ENCODE measurements at regions of chr19 and their contacts with region 1.

Region 1: GRCh38 chr19:8194528-8195267 is 14.5 kb upstream of the CERS4 start:
- DNase-seq: no peak
- ATAC-seq: peak; percentile 57
- H3K4me3 ChIP-seq: peak overlapping the region; percentile 31; the same call in 1 of the 2 replicates
- H3K27ac ChIP-seq: peak overlapping the region; percentile 97
- H3K4me1 ChIP-seq: peaks cover 36% of the 10 kb centered on the region
- H3K27me3 ChIP-seq: no peaks in the 10 kb centered on the region
- CTCF ChIP-seq: no peak
- EP300 ChIP-seq: no peak
- POLR2A ChIP-seq: no peak
- RAD21 ChIP-seq: no peak

Region 2: GRCh38 chr19:8148410-8149231 is 46.1 kb before region 1 on chr19:
- CTCF ChIA-PET with region 1: no interaction called
- POLR2A ChIA-PET with region 1: no interaction called
- RAD21 ChIA-PET with region 1: no interaction called
- SMC1A ChIA-PET with region 1: no interaction called
- in situ Hi-C with region 1: no loop called
- intact Hi-C with region 1: no loop called
- DNase-seq: no peak
- ATAC-seq: no peak
- H3K4me3 ChIP-seq: no peak overlapping the region
- H3K27ac ChIP-seq: no peak overlapping the region
- H3K4me1 ChIP-seq: no peaks in the 10 kb centered on the region
- H3K27me3 ChIP-seq: peaks cover 6 to 9% of the 10 kb centered on the region in 2 experiments; a peak in 3 of 4 replicates
- CTCF ChIP-seq: no peak
- EP300 ChIP-seq: no peak
- POLR2A ChIP-seq: no peak
- RAD21 ChIP-seq: no peak

Region 3: GRCh38 chr19:8208922-8209461 is 14.3 kb after region 1 on chr19 and contains the start of gene CERS4:
- CTCF ChIA-PET with region 1: interaction called, 52 read pairs
- POLR2A ChIA-PET with region 1: interaction called, 111 read pairs
- RAD21 ChIA-PET with region 1: interaction called, 100 read pairs
- SMC1A ChIA-PET with region 1: interaction called, 83 read pairs
- in situ Hi-C with region 1: no loop called
- intact Hi-C with region 1: no loop called
- DNase-seq: no peak
- ATAC-seq: peak; percentile 82
- H3K4me3 ChIP-seq: peak within 1 kb of the TSS; percentile 83
- H3K27ac ChIP-seq: peak within 1 kb of the TSS; percentile 95
- H3K4me1 ChIP-seq: peaks cover 13% of the 10 kb centered on the region
- H3K27me3 ChIP-seq: no peaks in the 10 kb centered on the region
- CTCF ChIP-seq: no peak
- EP300 ChIP-seq: no peak
- POLR2A ChIP-seq: no peak
- RAD21 ChIP-seq: no peak
- polyA plus RNA-seq, gene CERS4: 0.34 to 1.9 TPM

Region 4: GRCh38 chr19:8214802-8215201 is 20.1 kb after region 1 on chr19:
- CTCF ChIA-PET with region 1: interaction called, 52 read pairs
- POLR2A ChIA-PET with region 1: interaction called, 111 read pairs
- RAD21 ChIA-PET with region 1: interaction called, 100 read pairs
- SMC1A ChIA-PET with region 1: interaction called, 83 read pairs
- in situ Hi-C with region 1: no loop called
- intact Hi-C with region 1: no loop called
- DNase-seq: no peak
- ATAC-seq: no peak
- H3K4me3 ChIP-seq: peak overlapping the region; percentile 53; the same call in 1 of the 2 replicates
- H3K27ac ChIP-seq: peak overlapping the region; percentile 22; the same call in 1 of the 2 replicates
- H3K4me1 ChIP-seq: peaks cover 24% of the 10 kb centered on the region
- H3K27me3 ChIP-seq: no peaks in the 10 kb centered on the region
- CTCF ChIP-seq: no peak
- EP300 ChIP-seq: no peak
- POLR2A ChIP-seq: no peak
- RAD21 ChIP-seq: no peak

Region 5: GRCh38 chr19:8238251-8238650 is 43.6 kb after region 1 on chr19:
- CTCF ChIA-PET with region 1: interaction called, 3 read pairs
- POLR2A ChIA-PET with region 1: interaction called, 4 read pairs
- RAD21 ChIA-PET with region 1: interaction called, 6 read pairs
- SMC1A ChIA-PET with region 1: interaction called, 11 read pairs
- in situ Hi-C with region 1: no loop called
- intact Hi-C with region 1: no loop called
- DNase-seq: no peak
- ATAC-seq: no peak
- H3K4me3 ChIP-seq: no peak overlapping the region
- H3K27ac ChIP-seq: no peak overlapping the region
- H3K4me1 ChIP-seq: peaks cover 13% of the 10 kb centered on the region
- H3K27me3 ChIP-seq: no peaks in the 10 kb centered on the region
- CTCF ChIP-seq: no peak
- EP300 ChIP-seq: no peak
- POLR2A ChIP-seq: no peak
- RAD21 ChIP-seq: no peak

Region 6: DNA sequence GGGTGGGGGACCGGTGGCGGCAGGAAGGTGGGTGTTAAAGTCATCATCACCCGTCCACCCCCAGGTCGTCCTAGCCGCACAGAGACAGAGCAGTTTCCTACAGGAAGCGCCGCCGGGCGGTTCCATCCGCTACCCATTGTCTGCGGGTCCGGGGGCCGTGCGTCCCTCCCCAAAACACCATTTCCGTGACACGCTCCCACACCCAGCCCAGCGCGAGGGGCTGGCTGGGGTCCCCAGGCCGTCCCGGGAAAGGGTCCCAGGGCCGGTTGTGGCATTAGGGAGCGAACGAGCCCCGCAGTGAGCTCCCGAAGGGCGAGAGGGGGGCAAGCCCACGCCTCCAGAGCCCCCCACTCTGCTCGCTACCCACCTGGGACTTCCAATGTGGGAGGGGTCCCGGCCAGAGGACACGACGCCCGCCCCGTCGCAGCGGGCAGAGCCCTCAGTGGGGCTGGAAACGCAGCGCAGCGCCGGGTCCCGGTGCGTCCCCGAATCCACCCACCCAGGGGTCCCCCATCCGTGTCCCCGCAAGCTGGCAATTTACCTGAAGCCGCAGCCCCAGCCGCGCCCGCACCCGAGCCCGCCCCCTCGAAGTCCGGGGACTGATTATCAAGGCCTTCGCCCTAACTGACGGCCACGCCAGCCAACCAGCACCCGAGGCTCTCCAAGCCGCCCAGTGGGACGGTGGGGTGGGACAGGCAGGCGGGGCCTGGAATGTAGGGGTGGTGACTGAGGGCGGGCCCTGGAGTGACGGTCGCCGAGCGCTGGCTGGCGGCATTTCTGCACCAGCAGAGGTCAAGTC is 148.2 kb after region 1 on chr19 and contains the start of gene KANK3:
- CTCF ChIA-PET with region 1: no interaction called
- POLR2A ChIA-PET with region 1: no interaction called
- RAD21 ChIA-PET with region 1: no interaction called
- SMC1A ChIA-PET with region 1: no interaction called
- in situ Hi-C with region 1: no loop called
- intact Hi-C with region 1: no loop called
- DNase-seq: peak; percentile 55
- ATAC-seq: peak; percentile 100
- H3K4me3 ChIP-seq: peak within 1 kb of the TSS; percentile 60
- H3K27ac ChIP-seq: no peak within 1 kb of the TSS
- H3K4me1 ChIP-seq: peaks cover 3% of the 10 kb centered on the region
- H3K27me3 ChIP-seq: no peaks in the 10 kb centered on the region; a peak in 2 of 4 replicates
- CTCF ChIP-seq: no peak
- EP300 ChIP-seq: no peak
- POLR2A ChIP-seq: no peak
- RAD21 ChIP-seq: no peak
- polyA plus RNA-seq, gene KANK3: 0.07 TPM in 1 of 2 experiments, not detected in the other

Region 7: GRCh38 chr19:9009935-9010651 is 815.4 kb after region 1 on chr19 and contains the start of gene MUC16:
- CTCF ChIA-PET with region 1: no interaction called
- POLR2A ChIA-PET with region 1: no interaction called
- RAD21 ChIA-PET with region 1: no interaction called
- SMC1A ChIA-PET with region 1: no interaction called
- in situ Hi-C with region 1: no loop called
- intact Hi-C with region 1: no loop called
- DNase-seq: no peak
- ATAC-seq: no peak
- H3K4me3 ChIP-seq: no peak within 1 kb of the TSS
- H3K27ac ChIP-seq: no peak within 1 kb of the TSS
- H3K4me1 ChIP-seq: no peaks in the 10 kb centered on the region
- H3K27me3 ChIP-seq: no peaks in the 10 kb centered on the region
- CTCF ChIP-seq: no peak
- EP300 ChIP-seq: no peak
- POLR2A ChIP-seq: no peak
- RAD21 ChIP-seq: no peak
- polyA plus RNA-seq, gene MUC16: not detected